Posterior cingulate gyrus (tissue), 11 donors: ENCODE measurements at regions of chr5 and their contacts with region 1.

Region 1: GRCh38 chr5:136249678-136250266 is 56.8 kb upstream of the SMIM32 start:
- DNase-seq: peak; percentile 28 to 94 (median 71)

Region 2: GRCh38 chr5:135999406-136000139 is 250.2 kb before region 1 on chr5:
- intact Hi-C with region 1: no loop called
- DNase-seq: no peak

Region 3: DNA sequence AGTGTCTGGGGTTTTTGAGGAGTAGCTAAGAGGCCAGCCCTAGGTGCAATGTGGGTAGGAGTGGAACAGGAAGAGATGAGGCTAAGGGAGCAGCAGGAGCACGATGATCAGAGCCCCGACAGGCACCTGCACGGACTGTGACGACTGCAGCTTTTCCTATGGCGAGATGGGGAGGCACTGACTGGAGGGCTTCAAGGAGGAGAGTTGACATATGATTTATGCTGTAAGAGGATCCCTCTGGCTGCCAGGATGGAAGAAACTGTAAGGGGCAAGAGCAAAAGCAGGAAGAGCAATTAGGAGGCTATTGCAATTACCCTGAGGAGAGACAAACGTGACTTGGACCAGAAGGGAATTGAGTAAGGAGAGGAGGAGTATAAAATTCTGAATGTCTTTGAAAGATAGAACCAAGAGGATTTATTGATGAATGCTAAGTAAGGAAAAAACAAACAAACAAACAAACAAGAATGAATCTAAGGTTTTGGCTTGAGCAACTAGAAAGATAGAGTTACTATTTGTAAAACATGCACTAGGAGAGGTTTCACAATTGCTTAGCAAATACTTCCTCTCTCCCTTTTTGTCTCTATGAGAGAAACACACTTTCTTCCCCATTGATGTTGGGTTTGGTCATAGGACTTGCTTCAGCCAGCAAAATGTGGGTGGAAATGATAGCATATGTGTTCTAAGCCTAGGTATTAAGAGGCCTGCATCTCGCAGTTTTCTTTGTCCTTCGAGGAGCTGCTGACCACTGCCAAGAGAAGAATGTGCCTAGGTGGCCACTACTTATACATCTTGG is 82.6 kb after region 1 on chr5:
- intact Hi-C with region 1: no loop called
- DNase-seq: no peak

Region 4: DNA sequence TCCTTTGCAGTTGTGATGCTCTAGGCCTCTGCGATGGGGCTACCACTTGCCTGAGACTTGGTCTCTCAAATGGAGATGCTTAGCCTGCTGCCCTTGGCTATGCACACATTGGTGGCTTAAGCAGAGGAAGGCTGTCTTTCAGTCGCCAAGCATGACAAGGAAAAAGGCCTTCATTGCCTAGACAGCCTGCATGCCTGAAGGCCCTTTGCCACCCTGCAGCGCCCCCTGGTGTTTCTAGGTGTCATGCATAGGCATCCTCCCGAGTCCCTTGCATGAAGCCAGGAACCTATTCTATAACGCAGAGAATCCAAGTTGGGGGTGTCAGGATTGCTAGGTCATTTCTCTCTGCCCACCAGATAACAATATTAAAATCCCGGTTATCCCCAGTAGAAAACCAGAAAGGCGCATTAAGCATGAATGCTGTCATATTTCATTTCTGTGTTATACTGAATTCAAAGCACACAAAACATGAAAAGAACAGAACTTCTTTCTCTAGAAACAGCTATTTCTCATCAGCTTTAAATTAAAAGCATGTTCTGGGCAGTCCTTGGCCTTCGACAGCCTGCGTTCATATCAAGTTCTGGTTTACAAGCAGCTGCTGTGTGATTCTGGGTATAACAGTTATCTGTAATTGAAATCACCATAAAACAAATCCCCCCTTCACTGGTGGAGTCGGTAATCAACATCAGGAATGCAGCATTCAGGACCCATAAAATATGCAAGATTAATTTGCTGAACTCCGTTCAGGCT is 175.2 kb after region 1 on chr5:
- intact Hi-C with region 1: loop called (anchors 2 kb)
- DNase-seq: peak in 9 of 10 donors; percentile 51 to 95 (median 81)

Region 5: GRCh38 chr5:136769900-136770684 is 520.3 kb after region 1 on chr5:
- intact Hi-C with region 1: loop called (anchors 1 kb)
- DNase-seq: peak; percentile 34 to 96 (median 78)